ENCODE measurements at regions of chr6 and their contacts with region 1.

Region 1: GRCh38 chr6:143060354-143060805 is 309 bp upstream of the AIG1 start:
- DNase-seq: peak; percentile 90
- ATAC-seq: peak; percentile 66
- H3K4me3 ChIP-seq: peak overlapping the region; percentile 71 to 88 (median 81)
- H3K4me3 Mint-ChIP-seq: peak overlapping the region; percentile 97
- H3K27ac ChIP-seq: peak overlapping the region; percentile 69 to 80
- H3K27ac Mint-ChIP-seq: peak overlapping the region; percentile 92
- H3K4me1 ChIP-seq: peaks cover 13 to 16% of the 10 kb centered on the region in 2 donors
- H3K4me1 Mint-ChIP-seq: peaks cover 24% of the 10 kb centered on the region
- H3K27me3 ChIP-seq: no peaks in the 10 kb centered on the region
- H3K27me3 Mint-ChIP-seq: peaks cover 3% of the 10 kb centered on the region
- CTCF ChIP-seq: peak; percentile 40

Region 2: GRCh38 chr6:142679907-142680700 is 380.3 kb before region 1 on chr6:
- CTCF ChIA-PET with region 1: no interaction called
- POLR2A ChIA-PET with region 1: no interaction called
- intact Hi-C with region 1: no loop called
- DNase-seq: no peak
- ATAC-seq: no peak
- H3K4me3 ChIP-seq: no peak overlapping the region
- H3K4me3 Mint-ChIP-seq: no peak overlapping the region
- H3K27ac ChIP-seq: no peak overlapping the region
- H3K27ac Mint-ChIP-seq: no peak overlapping the region
- H3K4me1 ChIP-seq: no peaks in the 10 kb centered on the region
- H3K4me1 Mint-ChIP-seq: no peaks in the 10 kb centered on the region
- H3K27me3 ChIP-seq: no peaks in the 10 kb centered on the region
- H3K27me3 Mint-ChIP-seq: peaks cover 10% of the 10 kb centered on the region
- CTCF ChIP-seq: no peak

Region 3: DNA sequence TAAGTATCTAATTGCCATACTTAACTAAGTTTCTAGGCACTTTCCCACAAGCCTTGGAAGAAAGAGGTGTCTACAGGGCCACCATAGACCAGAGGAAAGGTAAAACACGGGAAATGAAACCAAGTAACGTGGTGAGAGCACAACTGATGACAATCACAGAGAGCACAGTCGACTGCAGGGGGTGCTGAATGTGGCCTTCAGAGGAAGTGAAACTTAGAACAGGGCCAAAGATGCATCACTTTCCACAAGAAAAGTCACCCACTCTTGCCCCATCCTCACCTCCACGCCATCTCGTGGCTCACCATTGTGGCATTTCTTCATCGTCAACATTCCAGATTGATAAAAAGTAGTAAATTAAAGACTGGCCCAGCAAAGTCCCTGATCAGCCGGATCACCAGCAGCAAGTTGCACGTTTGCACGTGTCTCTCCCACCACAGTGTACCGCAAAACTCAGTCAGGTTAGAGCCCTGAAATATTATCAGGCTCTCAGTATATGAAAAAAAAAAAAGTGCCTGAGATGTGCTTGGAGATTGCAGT is 146.8 kb before region 1 on chr6:
- CTCF ChIA-PET with region 1: no interaction called
- POLR2A ChIA-PET with region 1: no interaction called
- intact Hi-C with region 1: loop called (anchors 1 kb)
- DNase-seq: peak; percentile 92
- ATAC-seq: peak; percentile 95
- H3K4me3 ChIP-seq: peak overlapping the region in 4 of 5 experiments; percentile 9 to 60 (median 24)
- H3K4me3 Mint-ChIP-seq: peak overlapping the region; percentile 91
- H3K27ac ChIP-seq: peak overlapping the region; percentile 93
- H3K27ac Mint-ChIP-seq: peak overlapping the region; percentile 99
- H3K4me1 ChIP-seq: peaks cover 21 to 22% of the 10 kb centered on the region in 2 donors
- H3K4me1 Mint-ChIP-seq: peaks cover 40% of the 10 kb centered on the region
- H3K27me3 ChIP-seq: no peaks in the 10 kb centered on the region
- H3K27me3 Mint-ChIP-seq: no peaks in the 10 kb centered on the region
- CTCF ChIP-seq: peak; percentile 63

Region 4: GRCh38 chr6:143098054-143098671 is 37.8 kb after region 1 on chr6:
- CTCF ChIA-PET with region 1: no interaction called
- POLR2A ChIA-PET with region 1: no interaction called
- intact Hi-C with region 1: loop called (anchors 5 kb)
- DNase-seq: peak; percentile 65
- ATAC-seq: peak; percentile 82
- H3K4me3 ChIP-seq: peak overlapping the region in 4 of 5 experiments; percentile 1 to 17 (median 8)
- H3K4me3 Mint-ChIP-seq: no peak overlapping the region
- H3K27ac ChIP-seq: peak overlapping the region; percentile 39 to 52
- H3K27ac Mint-ChIP-seq: no peak overlapping the region
- H3K4me1 ChIP-seq: peaks cover 16 to 18% of the 10 kb centered on the region in 2 donors
- H3K4me1 Mint-ChIP-seq: peaks cover 2% of the 10 kb centered on the region
- H3K27me3 ChIP-seq: no peaks in the 10 kb centered on the region
- H3K27me3 Mint-ChIP-seq: no peaks in the 10 kb centered on the region
- CTCF ChIP-seq: no peak

Measured in B cell (primary cell).